Right cardiac atrium (tissue), 5 donors: ENCODE measurements at regions of chr13 and their contacts with region 1.

Region 1: DNA sequence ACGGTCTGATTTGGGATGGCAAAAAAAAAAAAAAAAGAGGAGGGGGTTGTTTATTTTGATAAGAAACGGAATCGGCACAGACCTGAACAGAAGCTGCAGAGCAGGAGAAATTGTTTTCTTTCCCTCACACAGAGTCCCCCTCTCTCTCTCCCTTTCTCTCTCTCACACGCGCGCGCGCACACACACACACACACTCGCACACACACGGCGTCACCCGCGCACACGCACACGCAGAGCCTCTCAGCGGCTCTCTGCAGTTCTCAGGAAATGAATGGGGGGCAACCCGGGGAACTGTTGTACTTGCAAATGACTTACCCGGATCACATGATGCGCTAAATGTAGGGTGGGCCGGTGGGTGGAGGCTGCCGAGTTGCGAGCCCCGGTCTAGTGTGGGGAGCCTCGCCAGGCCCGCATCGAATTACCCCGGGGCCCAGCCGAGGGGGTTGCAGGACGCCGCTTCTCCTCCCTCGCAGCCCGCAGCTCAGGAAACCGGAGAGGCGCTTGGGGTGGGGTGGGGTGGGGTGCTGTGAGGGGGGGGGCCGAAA is 475 bp downstream of the KLF12 start:
- DNase-seq: peak; percentile 89 to 95 (median 95)
- ATAC-seq: peak; percentile 77 to 81
- H3K4me3 ChIP-seq: peak overlapping the region; percentile 95
- H3K27ac ChIP-seq: peak overlapping the region; percentile 88
- H3K4me1 ChIP-seq: peaks cover 3% of the 10 kb centered on the region
- H3K27me3 ChIP-seq: no peaks in the 10 kb centered on the region

Region 2: DNA sequence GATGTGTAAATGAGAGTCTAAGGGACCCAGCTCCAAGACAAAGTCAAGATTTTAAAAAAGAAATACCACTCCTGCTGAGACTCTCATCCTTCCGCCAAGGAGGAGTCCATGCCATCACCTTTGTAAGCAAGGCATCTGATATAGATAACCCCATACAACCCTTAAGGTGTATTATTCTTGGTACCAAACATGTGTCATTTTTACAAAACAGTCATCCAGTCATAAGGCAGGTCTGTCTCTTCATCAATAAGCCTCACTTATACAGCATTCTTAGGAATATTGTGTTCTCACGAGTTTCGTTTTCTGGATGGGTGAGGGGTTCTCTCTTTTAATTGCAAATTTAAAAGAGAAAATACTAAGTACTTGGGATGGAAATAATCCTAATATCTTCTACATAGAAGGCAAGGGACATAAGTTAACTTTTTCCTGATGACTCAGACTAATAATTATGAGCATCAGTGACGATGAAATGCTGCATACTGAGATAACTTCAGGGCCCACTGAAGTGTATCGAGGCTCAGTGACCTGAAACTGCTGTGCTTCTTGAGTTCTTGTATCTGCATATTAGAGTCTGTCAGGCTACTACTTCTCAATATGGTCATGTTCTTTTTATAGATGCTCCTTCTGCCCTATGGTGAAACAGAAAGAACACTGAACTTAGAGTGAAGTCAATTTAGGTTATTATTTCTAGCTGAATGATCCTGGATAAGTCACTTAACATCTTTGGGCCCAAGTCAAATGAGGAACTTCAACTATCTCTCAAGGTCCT is 166.1 kb before region 1 on chr13:
- intact Hi-C with region 1: loop called in 2 of 4 experiments (anchors 10 kb)
- DNase-seq: no peak
- ATAC-seq: no peak
- H3K4me3 ChIP-seq: no peak overlapping the region
- H3K27ac ChIP-seq: no peak overlapping the region
- H3K4me1 ChIP-seq: peaks cover 7% of the 10 kb centered on the region
- H3K27me3 ChIP-seq: no peaks in the 10 kb centered on the region

Region 3: GRCh38 chr13:74062933-74063332 is 70.8 kb before region 1 on chr13:
- intact Hi-C with region 1: loop called in 1 of 4 experiments (anchors 10 kb)
- DNase-seq: peak; percentile 57 to 78 (median 69)
- ATAC-seq: peak; percentile 94 to 95
- H3K4me3 ChIP-seq: peak overlapping the region; percentile 56
- H3K27ac ChIP-seq: peak overlapping the region; percentile 95
- H3K4me1 ChIP-seq: peaks cover 5% of the 10 kb centered on the region
- H3K27me3 ChIP-seq: no peaks in the 10 kb centered on the region

Region 4: DNA sequence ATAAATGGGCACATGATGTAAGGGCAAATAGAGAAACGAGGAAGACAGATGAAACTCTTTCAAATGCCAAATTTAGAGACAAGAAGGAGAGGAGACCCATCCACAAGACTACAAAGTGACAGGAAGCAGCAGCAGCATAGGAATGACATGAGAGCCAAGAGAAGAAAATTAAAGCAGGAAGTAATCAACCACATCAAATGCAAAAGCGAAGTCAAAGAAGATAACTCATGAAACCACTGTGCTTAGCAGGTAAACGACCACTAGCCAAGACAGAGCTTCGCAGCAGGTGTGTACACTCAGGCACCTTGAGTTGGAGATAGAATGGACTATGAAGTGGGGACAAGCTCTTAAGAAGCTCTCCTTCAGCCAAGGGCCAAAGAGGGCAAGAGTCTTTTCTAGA is 63.7 kb before region 1 on chr13:
- intact Hi-C with region 1: loop called in 2 of 4 experiments (anchors 10 kb)
- DNase-seq: peak in 1 of 3 donors; percentile 11
- ATAC-seq: no peak
- H3K4me3 ChIP-seq: no peak overlapping the region
- H3K27ac ChIP-seq: no peak overlapping the region
- H3K4me1 ChIP-seq: peaks cover 8% of the 10 kb centered on the region
- H3K27me3 ChIP-seq: no peaks in the 10 kb centered on the region